Mammary epithelial cell (primary cell): ENCODE measurements at regions of chr15 and their contacts with region 1.

Region 1: DNA sequence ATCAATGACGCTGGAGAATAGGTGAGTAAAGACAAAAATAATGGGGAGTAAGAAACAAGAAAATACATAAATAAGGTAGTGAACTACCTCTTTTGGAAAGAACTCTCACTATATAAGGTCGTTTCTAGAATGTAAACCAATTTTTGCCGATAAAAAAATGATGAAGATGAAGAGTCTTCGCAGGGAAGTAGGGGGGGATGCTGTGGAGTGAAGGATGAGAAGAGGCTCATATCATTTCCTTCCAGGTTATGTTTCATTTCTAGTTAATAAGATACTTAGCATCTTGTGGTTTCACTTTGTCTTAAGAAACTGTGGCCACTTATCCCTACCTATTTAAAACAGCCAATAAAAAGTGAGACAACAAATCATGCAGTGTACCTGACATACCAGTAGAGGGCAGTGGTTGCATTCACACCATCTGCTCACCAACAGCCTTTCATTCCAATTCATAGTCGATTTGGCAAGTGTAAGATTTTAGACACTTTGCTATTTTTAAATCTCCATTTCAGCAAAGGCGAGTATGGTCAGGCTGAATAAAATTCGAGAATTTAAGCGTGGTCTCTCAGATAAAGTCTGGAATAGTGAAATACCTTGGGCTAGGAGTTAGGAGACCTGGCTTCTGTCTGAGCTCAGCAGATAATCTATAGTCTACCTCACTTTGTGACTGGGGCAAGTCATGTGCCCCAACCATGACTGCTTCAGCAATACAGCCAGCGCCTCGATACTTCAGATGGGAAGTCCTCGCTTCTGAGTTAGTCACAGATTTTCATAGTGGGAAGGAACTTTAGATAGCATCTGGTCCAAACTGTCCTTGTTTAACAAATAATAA is 28.9 kb upstream of the ICE2 start:
- DNase-seq: peak; percentile 68
- H3K4me3 ChIP-seq: no peak overlapping the region
- H3K27ac ChIP-seq: no peak overlapping the region
- H3K4me1 ChIP-seq: peaks cover 24% of the 10 kb centered on the region
- H3K27me3 ChIP-seq: no peaks in the 10 kb centered on the region
- CTCF ChIP-seq: peak; percentile 91 to 99

Region 2: GRCh38 chr15:60469893-60470641 is 37.7 kb before region 1 on chr15:
- CTCF ChIA-PET with region 1: no interaction called
- dilution Hi-C with region 1: no loop called
- in situ Hi-C with region 1: no loop called
- intact Hi-C with region 1: no loop called
- DNase-seq: peak; percentile 31
- H3K4me3 ChIP-seq: no peak overlapping the region
- H3K27ac ChIP-seq: peak overlapping the region; percentile 36
- H3K4me1 ChIP-seq: peaks cover 5% of the 10 kb centered on the region
- H3K27me3 ChIP-seq: no peaks in the 10 kb centered on the region
- CTCF ChIP-seq: no peak

Region 3: DNA sequence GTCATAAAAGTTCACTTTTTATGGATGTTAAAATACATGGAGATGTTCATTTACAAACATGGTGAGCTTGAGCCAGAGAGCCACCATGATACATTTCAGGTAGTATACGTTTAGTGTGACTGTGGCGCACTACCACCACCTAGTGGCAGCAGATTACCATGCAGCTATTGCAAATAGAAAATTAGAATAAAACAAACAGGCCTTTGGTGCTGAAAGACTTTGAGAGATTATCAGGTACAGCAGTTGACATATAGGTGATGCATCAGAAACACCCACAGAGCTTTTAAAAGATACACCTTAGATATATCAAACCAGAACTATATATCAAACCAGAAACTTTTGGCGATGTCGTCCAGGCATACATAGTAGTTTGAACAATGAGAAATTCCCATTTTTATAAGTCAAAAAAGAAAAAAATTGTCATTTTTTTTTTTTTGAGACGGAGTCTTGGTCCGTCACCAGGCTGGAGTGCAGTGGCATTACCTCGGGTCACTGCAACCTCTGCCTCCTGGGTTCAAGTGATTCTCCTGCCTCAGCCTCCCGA is 13.1 kb after region 1 on chr15:
- CTCF ChIA-PET with region 1: interaction called, 9 read pairs
- dilution Hi-C with region 1: no loop called
- in situ Hi-C with region 1: no loop called
- intact Hi-C with region 1: loop called (anchors 1 kb)
- DNase-seq: peak; percentile 72
- H3K4me3 ChIP-seq: no peak overlapping the region
- H3K27ac ChIP-seq: peak overlapping the region; percentile 89
- H3K4me1 ChIP-seq: peaks cover 39% of the 10 kb centered on the region
- H3K27me3 ChIP-seq: no peaks in the 10 kb centered on the region
- CTCF ChIP-seq: peak; percentile 87 to 97

Region 4: GRCh38 chr15:60585743-60586708 is 78.2 kb after region 1 on chr15:
- CTCF ChIA-PET with region 1: interaction called, 4 read pairs
- dilution Hi-C with region 1: no loop called
- in situ Hi-C with region 1: no loop called
- intact Hi-C with region 1: loop called (anchors 2 kb)
- DNase-seq: peak; percentile 49
- H3K4me3 ChIP-seq: no peak overlapping the region
- H3K27ac ChIP-seq: no peak overlapping the region
- H3K4me1 ChIP-seq: peaks cover 9% of the 10 kb centered on the region
- H3K27me3 ChIP-seq: no peaks in the 10 kb centered on the region
- CTCF ChIP-seq: peak; percentile 85 to 95

Region 5: DNA sequence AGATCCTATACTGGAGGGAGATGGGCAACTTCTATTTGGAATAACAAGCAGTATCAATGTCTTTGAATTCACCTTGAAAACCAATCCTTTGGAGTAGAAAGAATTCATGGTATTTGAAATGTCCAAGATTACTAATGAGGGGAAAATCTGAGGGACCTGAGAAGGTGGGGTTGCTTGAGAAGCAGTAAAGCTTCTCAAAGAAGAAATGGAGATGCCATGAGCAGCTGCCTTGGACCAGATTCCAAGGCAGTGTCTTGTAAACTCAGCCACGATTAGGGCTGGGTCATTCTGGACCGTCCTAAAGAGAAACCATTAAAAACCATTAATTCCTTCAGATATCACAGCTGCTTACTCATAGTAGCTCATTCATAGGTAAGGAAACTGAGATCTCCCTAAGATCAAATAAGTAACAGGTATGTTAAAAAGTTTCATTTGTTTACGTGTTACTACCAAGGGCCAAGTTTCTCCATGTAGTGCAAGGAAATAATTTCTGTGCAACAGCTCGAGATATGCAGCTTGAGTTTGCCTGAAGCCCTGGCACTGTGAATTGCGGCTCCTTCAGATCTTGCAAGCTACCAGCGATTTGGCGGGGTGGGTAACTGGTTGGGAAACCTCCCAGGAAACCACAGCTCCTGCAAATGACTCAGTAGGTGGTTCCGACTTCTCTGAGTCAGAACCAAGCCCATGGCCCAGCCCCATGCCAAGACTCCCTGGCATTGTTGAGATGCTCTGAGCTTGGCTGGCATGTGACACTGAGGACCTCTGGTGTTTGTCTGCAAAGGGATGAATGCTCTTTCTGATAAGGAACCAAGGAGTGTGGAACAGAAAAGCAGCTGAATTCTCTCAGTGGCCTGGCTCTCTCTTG is 424.5 kb after region 1 on chr15:
- CTCF ChIA-PET with region 1: interaction called, 4 read pairs
- dilution Hi-C with region 1: no loop called
- in situ Hi-C with region 1: no loop called
- intact Hi-C with region 1: loop called (anchors 2 kb)
- DNase-seq: peak; percentile 93
- H3K4me3 ChIP-seq: peak overlapping the region in 1 of 3 experiments; percentile 23
- H3K27ac ChIP-seq: no peak overlapping the region
- H3K4me1 ChIP-seq: peaks cover 26% of the 10 kb centered on the region
- H3K27me3 ChIP-seq: peaks cover 3% of the 10 kb centered on the region
- CTCF ChIP-seq: peak; percentile 68 to 79